GM18951 (cell line): ENCODE measurements at regions of chr4 and their contacts with region 1.

Region 1: GRCh38 chr4:10018818-10019461 is 2.4 kb downstream of the SLC2A9 start:
- POLR2A ChIP-seq: peak; percentile 54

Region 2: GRCh38 chr4:9762823-9763475 is 256.0 kb before region 1 on chr4:
- in situ Hi-C with region 1: loop called (anchors 5 kb)
- POLR2A ChIP-seq: no peak

Region 3: GRCh38 chr4:9904976-9905587 is 113.9 kb before region 1 on chr4:
- in situ Hi-C with region 1: no loop called
- POLR2A ChIP-seq: no peak

Region 4: DNA sequence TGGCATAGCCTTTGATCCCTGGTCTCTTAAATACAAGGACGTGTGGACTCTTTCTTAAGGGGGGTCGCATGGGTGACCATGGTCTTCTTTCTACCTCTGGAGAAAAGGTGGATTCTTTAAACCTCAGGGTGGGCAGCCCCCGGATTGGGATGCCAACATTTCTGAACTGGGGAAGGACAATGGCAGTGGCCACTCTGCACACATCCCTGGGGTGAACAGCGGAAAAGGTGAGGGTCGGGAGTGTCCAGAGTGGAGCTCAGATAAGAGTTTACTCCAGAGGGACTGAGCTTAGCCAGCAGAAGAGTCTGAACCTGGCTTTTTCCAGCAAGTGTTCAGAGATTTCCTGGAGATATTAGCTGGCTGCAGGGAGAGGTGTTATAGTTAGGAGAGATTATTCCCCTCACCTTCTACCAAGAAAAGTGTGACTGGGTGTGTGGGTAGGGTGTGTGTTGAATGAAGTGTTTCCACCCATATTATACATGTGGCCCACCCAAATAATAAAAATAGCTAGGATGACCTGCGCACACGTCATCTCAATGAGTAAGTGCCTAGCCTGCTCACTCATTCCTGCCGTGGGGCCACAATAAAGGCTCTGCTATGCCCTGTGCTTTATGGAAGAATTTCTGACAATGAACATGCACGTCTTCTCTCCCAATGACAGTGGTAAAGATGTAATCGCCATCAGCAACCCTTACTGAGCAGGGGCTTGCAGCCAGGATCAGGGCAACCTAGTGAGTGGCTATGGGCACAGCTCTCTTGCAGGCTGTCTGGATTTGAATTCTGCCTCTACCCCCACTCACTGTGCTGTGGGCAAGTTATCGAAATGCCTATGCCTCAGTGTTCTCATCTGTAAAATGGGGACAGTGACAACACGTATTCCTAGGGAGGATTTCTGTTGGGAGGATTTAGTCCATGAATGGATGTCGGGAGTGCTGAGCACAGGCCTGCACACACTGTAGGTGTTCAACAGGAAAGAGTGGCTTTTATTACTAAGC is 74.2 kb before region 1 on chr4:
- in situ Hi-C with region 1: no loop called
- POLR2A ChIP-seq: no peak

Region 5: GRCh38 chr4:10403633-10404445 is 384.9 kb after region 1 on chr4:
- in situ Hi-C with region 1: no loop called
- POLR2A ChIP-seq: no peak